Activated CD4-positive, alpha-beta memory T cell treated with anti-CD3 and anti-CD28 coated beads for 36 hours (primary cell): ENCODE measurements at regions of chr11 and their contacts with region 1.

Region 1: DNA sequence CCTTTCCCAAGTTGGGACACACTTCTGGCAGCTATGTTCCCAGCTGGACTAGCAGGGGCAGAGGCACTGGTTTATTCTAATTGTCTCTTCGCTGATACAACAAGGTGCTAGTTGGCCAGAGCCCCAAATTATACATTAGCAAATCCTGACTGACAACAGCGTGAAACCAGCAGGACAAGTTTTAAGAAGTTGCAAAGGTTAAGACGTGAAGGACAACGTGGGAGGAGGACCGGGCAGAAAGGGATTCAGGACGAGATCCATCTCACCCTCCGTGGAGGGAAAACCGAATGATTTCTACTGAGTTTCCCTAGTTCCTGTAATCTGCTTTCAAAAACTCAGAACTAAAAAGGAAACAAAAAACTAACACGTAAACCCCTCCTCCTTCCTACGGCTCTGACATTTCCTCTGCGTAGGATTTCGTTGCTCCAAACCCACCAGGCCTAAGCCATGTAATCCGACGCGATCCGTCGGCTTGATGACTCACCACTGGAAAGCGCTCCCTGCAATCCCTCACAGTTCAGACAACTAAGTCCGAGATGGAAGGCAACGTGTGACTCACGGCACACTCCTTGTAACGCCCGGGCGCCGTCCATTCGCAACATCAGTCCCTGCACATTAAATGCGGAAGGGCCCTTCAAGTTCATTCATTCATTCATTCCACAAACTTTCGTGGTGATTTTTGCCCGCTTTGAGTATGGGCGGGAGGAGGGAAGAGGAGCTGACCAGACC is 703 bp downstream of the POGLUT3 start:
- DNase-seq: peak; percentile 87
- H3K4me3 Mint-ChIP-seq: peak overlapping the region; percentile 95
- H3K27ac Mint-ChIP-seq: peak overlapping the region; percentile 99
- H3K4me1 Mint-ChIP-seq: peaks cover 16% of the 10 kb centered on the region
- H3K27me3 Mint-ChIP-seq: no peaks in the 10 kb centered on the region

Region 2: GRCh38 chr11:108593214-108593922 is 95.9 kb after region 1 on chr11 and contains the start of gene EXPH5:
- CTCF ChIA-PET with region 1: no interaction called
- POLR2A ChIA-PET with region 1: no interaction called
- intact Hi-C with region 1: loop called (anchors 1 kb)
- DNase-seq: peak; percentile 93
- H3K4me3 Mint-ChIP-seq: peak within 1 kb of the TSS; percentile 87
- H3K27ac Mint-ChIP-seq: peak within 1 kb of the TSS; percentile 68
- H3K4me1 Mint-ChIP-seq: peaks cover 17% of the 10 kb centered on the region
- H3K27me3 Mint-ChIP-seq: peaks cover 11% of the 10 kb centered on the region
- total RNA-seq, gene EXPH5: 1.4 to 1.8 TPM

Region 3: DNA sequence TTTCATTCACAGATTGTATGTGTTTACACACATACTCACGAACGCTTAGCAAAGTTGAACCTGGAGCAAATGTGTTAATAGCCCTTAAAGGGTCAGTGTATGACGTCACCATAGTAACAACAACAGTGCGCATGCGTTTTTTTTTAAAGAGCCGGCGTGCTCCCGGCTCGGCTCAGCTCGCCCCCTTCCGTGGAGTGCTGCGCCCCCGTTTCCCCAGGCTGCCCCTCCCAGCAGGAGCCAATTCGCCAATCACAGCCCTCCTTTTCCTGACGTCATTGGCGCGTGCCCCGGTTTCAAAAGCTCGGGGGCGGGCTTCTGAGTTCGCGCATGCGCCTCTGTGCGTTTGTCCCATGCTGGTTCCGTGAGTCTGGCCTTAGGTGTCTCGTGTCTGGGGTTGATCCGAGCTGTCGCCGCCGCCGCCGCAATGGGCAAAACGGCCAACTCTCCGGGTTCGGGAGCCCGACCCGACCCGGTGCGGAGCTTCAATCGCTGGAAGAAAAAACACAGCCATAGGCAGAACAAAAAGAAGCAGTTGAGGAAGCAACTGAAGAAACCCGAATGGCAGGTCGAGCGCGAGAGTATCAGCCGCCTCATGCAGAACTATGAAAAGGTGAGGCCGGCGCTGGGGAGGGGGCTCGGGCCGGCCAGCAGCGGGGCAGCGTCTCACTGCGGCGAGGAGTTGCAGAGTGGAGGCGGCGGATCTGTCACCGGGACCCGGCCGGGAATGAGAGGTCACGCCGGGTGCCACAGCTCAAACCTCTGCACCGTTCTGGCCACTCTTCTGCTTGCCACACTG is 167.4 kb after region 1 on chr11 and contains the start of gene DDX10:
- CTCF ChIA-PET with region 1: no interaction called
- POLR2A ChIA-PET with region 1: no interaction called
- intact Hi-C with region 1: loop called (anchors 10 kb)
- DNase-seq: peak; percentile 99
- H3K4me3 Mint-ChIP-seq: peak within 1 kb of the TSS; percentile 100
- H3K27ac Mint-ChIP-seq: peak within 1 kb of the TSS; percentile 80
- H3K4me1 Mint-ChIP-seq: peaks cover 44% of the 10 kb centered on the region
- H3K27me3 Mint-ChIP-seq: no peaks in the 10 kb centered on the region
- total RNA-seq, gene DDX10: 34.8 to 37.7 TPM